H1 (cell line): ENCODE measurements at regions of chr3 and their contacts with region 1.

Region 1: GRCh38 chr3:44772099-44772442 is 10.5 kb downstream of the KIF15 start:
- DNase-seq: no peak
- H3K4me3 ChIP-seq: no peak overlapping the region; a peak in 1 of 8 replicates
- H3K27ac ChIP-seq: no peak overlapping the region
- H3K4me1 ChIP-seq: no peaks in the 10 kb centered on the region
- H3K27me3 ChIP-seq: no peaks in the 10 kb centered on the region
- CTCF ChIP-seq: no peak
- EP300 ChIP-seq: no peak
- POLR2A ChIP-seq: no peak
- RAD21 ChIP-seq: no peak

Region 2: DNA sequence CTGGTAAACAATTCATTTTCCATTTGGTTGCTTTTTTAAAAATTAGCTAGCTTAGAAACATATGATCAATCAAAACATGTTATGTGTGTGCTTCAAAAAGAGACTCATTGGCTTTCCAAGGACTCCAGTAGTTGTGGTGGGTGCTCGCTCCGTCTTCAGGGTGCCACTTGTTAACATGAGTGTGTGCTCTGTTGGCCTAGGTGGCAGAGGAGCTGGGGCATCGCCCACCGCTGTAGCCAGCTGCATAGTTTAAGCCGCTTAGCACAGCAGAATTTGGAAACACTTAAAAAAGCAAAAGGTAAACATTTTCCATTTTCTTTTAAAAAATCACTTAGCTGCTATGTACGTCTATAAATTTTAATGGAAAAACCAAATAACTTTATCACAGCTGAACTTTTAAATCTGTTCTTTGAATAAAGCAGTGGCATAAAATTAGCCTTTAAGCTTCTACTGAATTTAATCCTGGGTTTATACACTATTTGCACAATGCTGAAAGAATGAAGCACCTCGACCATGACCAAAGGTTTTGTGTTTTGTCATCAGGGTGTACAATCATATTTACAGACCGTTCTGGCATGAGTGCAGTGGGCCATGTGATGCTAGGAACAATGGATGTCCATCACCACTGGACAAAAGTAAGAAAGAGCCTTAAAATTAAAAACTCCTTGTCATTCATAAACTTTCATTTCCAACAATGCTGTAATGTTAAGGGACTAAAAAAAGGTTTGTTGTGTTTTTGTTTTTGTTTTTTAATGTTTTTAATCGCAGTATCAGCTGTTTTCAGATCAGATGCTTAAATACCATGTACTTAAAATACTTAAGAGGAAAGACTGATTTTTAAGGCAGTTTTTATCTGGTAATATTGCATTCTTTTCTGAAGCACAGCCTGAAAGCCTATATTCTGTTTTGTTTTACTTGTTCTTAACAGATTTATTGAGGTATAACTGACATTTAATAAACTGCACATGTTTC is 375.6 kb before region 1 on chr3:
- CTCF ChIA-PET with region 1: no interaction called
- POLR2A ChIA-PET with region 1: no interaction called
- DNase-seq: no peak
- H3K4me3 ChIP-seq: no peak overlapping the region
- H3K27ac ChIP-seq: no peak overlapping the region
- H3K4me1 ChIP-seq: no peaks in the 10 kb centered on the region
- H3K27me3 ChIP-seq: no peaks in the 10 kb centered on the region
- CTCF ChIP-seq: no peak
- EP300 ChIP-seq: no peak
- POLR2A ChIP-seq: no peak
- RAD21 ChIP-seq: no peak

Region 3: DNA sequence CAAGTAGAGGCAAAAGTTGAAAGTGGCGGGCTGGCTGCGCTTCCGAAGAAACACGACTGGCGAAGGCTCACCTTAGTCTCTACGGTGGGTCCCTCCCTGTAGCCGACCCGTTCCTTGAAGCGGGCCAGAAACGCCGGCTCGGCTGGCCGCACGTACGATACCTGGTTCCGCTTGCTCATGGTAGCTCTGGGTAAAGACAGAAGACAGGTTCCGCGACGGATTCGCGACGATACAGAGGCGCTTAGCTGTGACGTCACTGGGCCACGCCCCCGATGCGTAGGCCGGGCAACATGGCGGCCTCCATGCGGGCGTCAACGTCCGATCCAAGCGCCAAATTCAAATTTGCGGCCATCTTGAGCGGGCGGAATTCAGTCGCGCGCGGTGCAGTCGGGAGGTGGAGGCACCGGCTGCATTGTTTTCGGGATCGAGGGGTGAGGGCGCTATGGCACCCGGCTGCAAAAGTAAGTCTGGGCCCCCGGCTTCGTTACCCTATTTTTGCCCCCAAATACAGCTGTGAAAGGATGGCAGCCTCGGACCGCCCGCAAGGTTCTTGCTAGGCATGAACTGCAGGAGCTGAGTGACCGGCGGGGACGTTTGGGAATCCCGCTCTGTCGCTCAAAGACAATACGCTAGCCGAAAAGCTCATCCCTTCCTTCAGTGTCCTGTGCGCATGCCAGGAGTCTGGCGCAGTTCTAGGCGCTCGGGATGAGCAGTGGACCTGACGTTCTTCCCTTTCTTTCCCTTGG is 10.5 kb before region 1 on chr3 and contains the starts of genes KIAA1143 and KIF15:
- CTCF ChIA-PET with region 1: no interaction called
- POLR2A ChIA-PET with region 1: interaction called, 12 read pairs
- DNase-seq: peak; percentile 91 to 98
- H3K4me3 ChIP-seq: peak within 1 kb of the TSS; percentile 89 to 97 (median 92)
- H3K27ac ChIP-seq: peak within 1 kb of the TSS; percentile 92
- H3K4me1 ChIP-seq: no peaks in the 10 kb centered on the region; a peak in 1 of 7 replicates
- H3K27me3 ChIP-seq: no peaks in the 10 kb centered on the region
- CTCF ChIP-seq: no peak; a peak in 1 of 4 replicates
- EP300 ChIP-seq: 0 out of 3 replicates have a peak, but pooled peaks of 1 of the 2 experiments have one; percentile 24
- POLR2A ChIP-seq: peak; percentile 95 to 98
- RAD21 ChIP-seq: no peak; a peak in 1 of 4 replicates
- total RNA-seq, gene KIAA1143: 65.1 and 67.2 TPM in 2 replicates
- total RNA-seq, gene KIF15: 25.5 and 26.4 TPM in 2 replicates

Region 4: GRCh38 chr3:44861412-44862220 is 89.5 kb after region 1 on chr3 and contains the start of gene TMEM42:
- CTCF ChIA-PET with region 1: no interaction called
- POLR2A ChIA-PET with region 1: no interaction called
- DNase-seq: peak; percentile 89 to 96
- H3K4me3 ChIP-seq: peak within 1 kb of the TSS; percentile 64 to 71 (median 68)
- H3K27ac ChIP-seq: peak within 1 kb of the TSS; percentile 79
- H3K4me1 ChIP-seq: peaks cover 0 to 5% (median 4%) of the 10 kb centered on the region in 4 experiments; a peak in 5 of 7 replicates
- H3K27me3 ChIP-seq: no peaks in the 10 kb centered on the region
- CTCF ChIP-seq: peak; percentile 29 to 32 (median 31)
- EP300 ChIP-seq: no peak
- POLR2A ChIP-seq: peak; percentile 89 to 92
- RAD21 ChIP-seq: peak; percentile 45 to 54; a peak in 3 of 4 replicates
- total RNA-seq, gene TMEM42: 10.8 and 11.2 TPM in 2 replicates